ENCODE measurements at regions of chr16 and their contacts with region 1.

Region 1: DNA sequence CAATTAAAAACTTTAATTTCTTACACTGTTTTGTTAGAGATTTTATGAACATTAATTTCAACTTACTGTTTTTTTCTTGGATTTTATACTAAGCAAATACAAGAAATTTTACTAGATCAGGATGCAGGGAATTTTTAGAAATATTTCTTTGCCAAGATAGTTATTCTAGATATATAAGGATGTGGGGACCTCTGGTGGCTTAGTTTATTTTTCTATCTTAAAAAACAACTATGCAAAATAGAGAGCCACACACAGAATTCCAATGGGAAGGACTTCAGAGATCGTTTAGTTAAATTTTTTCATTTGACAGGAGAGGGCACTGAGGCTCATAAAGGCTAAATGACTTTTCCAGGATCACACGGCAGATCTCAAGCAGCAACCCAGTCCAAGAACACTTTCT is 23.0 kb upstream of the CAPNS2 start:
- DNase-seq: peak; percentile 47
- H3K4me3 ChIP-seq: no peak overlapping the region
- H3K27ac ChIP-seq: no peak overlapping the region
- H3K4me1 ChIP-seq: peaks cover 19% of the 10 kb centered on the region
- H3K27me3 ChIP-seq: no peaks in the 10 kb centered on the region
- CTCF ChIP-seq: no peak
- POLR2A ChIP-seq: no peak

Region 2: GRCh38 chr16:55471448-55472097 is 71.9 kb before region 1 on chr16:
- CTCF ChIA-PET with region 1: interaction called, 7 read pairs
- POLR2A ChIA-PET with region 1: no interaction called
- dilution Hi-C with region 1: no loop called
- intact Hi-C with region 1: loop called (anchors 1 kb)
- DNase-seq: peak; percentile 39
- H3K4me3 ChIP-seq: no peak overlapping the region
- H3K27ac ChIP-seq: peak overlapping the region; percentile 67
- H3K4me1 ChIP-seq: peaks cover 21% of the 10 kb centered on the region
- H3K27me3 ChIP-seq: no peaks in the 10 kb centered on the region
- CTCF ChIP-seq: no peak
- POLR2A ChIP-seq: no peak

Region 3: DNA sequence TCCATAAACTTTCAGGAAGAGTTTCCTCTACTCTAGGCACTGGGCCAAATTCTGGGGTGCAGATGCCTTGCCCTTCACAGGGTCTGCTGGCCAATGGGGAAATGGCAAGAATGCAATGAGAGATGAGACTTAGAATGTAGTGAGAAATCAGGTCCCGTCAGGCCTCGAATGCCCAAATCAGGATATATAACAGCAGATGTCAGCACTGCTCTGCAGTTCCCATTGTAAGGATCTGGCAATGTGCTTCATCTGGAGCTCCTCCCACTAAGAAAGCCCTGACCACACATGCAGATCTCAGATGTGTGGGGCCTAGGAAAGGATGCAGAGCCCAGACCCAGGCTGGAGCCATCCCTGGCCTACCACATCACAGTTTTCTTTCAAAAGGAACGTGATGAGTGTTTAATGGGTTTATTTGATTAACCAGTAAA is 48.5 kb before region 1 on chr16:
- CTCF ChIA-PET with region 1: interaction called, 17 read pairs
- POLR2A ChIA-PET with region 1: interaction called, 5 read pairs
- dilution Hi-C with region 1: no loop called
- intact Hi-C with region 1: loop called (anchors 1 kb)
- DNase-seq: peak; percentile 85
- H3K4me3 ChIP-seq: no peak overlapping the region
- H3K27ac ChIP-seq: peak overlapping the region; percentile 2
- H3K4me1 ChIP-seq: peaks cover 52% of the 10 kb centered on the region
- H3K27me3 ChIP-seq: no peaks in the 10 kb centered on the region
- CTCF ChIP-seq: peak; percentile 20 to 33
- POLR2A ChIP-seq: no peak

Region 4: GRCh38 chr16:55529018-55529417 is 14.5 kb before region 1 on chr16:
- CTCF ChIA-PET with region 1: interaction called, 9 read pairs
- POLR2A ChIA-PET with region 1: no interaction called
- dilution Hi-C with region 1: no loop called
- intact Hi-C with region 1: loop called (anchors 2 kb)
- DNase-seq: peak; percentile 62
- H3K4me3 ChIP-seq: no peak overlapping the region
- H3K27ac ChIP-seq: peak overlapping the region; percentile 63
- H3K4me1 ChIP-seq: peaks cover 38% of the 10 kb centered on the region
- H3K27me3 ChIP-seq: no peaks in the 10 kb centered on the region
- CTCF ChIP-seq: no peak
- POLR2A ChIP-seq: no peak